HCT116 (cell line): ENCODE measurements at regions of chr1 and their contacts with region 1.

Region 1: GRCh38 chr1:117758444-117759316 is 152.8 kb downstream of the TENT5C start:
- DNase-seq: peak; percentile 69
- ATAC-seq: peak; percentile 94
- H3K4me3 ChIP-seq: peak overlapping the region; percentile 37 to 43
- H3K27ac ChIP-seq: no peak overlapping the region
- H3K4me1 ChIP-seq: peaks cover 0 to 12% of the 10 kb centered on the region in 2 experiments; a peak in 2 of 4 replicates
- H3K27me3 ChIP-seq: no peaks in the 10 kb centered on the region
- CTCF ChIP-seq: peak; percentile 65 to 92 (median 83)
- POLR2A ChIP-seq: no peak
- RAD21 ChIP-seq: peak; percentile 72

Region 2: GRCh38 chr1:117121776-117122697 is 636.6 kb before region 1 on chr1:
- CTCF ChIA-PET with region 1: no interaction called
- POLR2A ChIA-PET with region 1: no interaction called
- RAD21 ChIA-PET with region 1: no interaction called
- intact Hi-C with region 1: loop called (anchors 10 kb)
- DNase-seq: peak; percentile 90
- ATAC-seq: peak; percentile 97
- H3K4me3 ChIP-seq: peak overlapping the region; percentile 46 to 67
- H3K27ac ChIP-seq: peak overlapping the region; percentile 58
- H3K4me1 ChIP-seq: peaks cover 0 to 14% of the 10 kb centered on the region in 2 experiments; a peak in 1 of 4 replicates
- H3K27me3 ChIP-seq: peaks cover 9% of the 10 kb centered on the region; the same call in 1 of the 2 replicates
- CTCF ChIP-seq: peak; percentile 52 to 75 (median 68); a peak in 5 of 6 replicates
- POLR2A ChIP-seq: peak; percentile 17
- RAD21 ChIP-seq: peak; percentile 61

Region 3: DNA sequence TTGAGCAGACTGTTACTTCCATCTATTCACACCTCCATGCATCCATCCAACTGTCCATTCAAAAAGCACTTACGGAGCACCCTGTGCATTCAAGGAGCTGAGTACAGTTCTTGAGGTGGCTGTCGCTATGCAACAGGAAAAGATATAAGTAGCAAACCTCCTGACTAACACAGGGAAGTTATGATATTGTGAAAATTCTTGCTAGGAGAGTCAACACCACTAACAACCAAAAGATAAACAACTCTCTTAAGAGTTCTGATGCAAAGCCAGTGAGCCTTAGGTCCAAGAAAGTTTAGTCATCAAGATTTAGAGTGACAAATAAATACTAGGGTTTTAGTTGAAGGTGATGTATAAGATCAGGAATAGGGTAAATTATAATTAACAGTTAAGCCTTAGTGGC is 592.6 kb before region 1 on chr1:
- CTCF ChIA-PET with region 1: no interaction called
- POLR2A ChIA-PET with region 1: no interaction called
- RAD21 ChIA-PET with region 1: no interaction called
- intact Hi-C with region 1: no loop called
- DNase-seq: no peak
- ATAC-seq: no peak
- H3K4me3 ChIP-seq: no peak overlapping the region
- H3K27ac ChIP-seq: no peak overlapping the region
- H3K4me1 ChIP-seq: no peaks in the 10 kb centered on the region
- H3K27me3 ChIP-seq: no peaks in the 10 kb centered on the region
- CTCF ChIP-seq: no peak
- POLR2A ChIP-seq: no peak
- RAD21 ChIP-seq: no peak

Region 4: GRCh38 chr1:117512743-117513321 is 245.8 kb before region 1 on chr1:
- CTCF ChIA-PET with region 1: interaction called, 26 read pairs
- POLR2A ChIA-PET with region 1: interaction called, 3 read pairs
- RAD21 ChIA-PET with region 1: interaction called in 1 of 2 experiments, 4 read pairs
- intact Hi-C with region 1: loop called (anchors 1 kb)
- DNase-seq: no peak
- ATAC-seq: peak; percentile 52; the same call in 1 of the 2 replicates
- H3K4me3 ChIP-seq: no peak overlapping the region
- H3K27ac ChIP-seq: no peak overlapping the region
- H3K4me1 ChIP-seq: no peaks in the 10 kb centered on the region
- H3K27me3 ChIP-seq: no peaks in the 10 kb centered on the region
- CTCF ChIP-seq: peak; percentile 41 to 73 (median 47); a peak in 4 of 6 replicates
- POLR2A ChIP-seq: no peak
- RAD21 ChIP-seq: peak; percentile 64

Region 5: GRCh38 chr1:117710710-117711109 is 48.0 kb before region 1 on chr1:
- CTCF ChIA-PET with region 1: interaction called, 10 read pairs
- POLR2A ChIA-PET with region 1: no interaction called
- RAD21 ChIA-PET with region 1: no interaction called
- intact Hi-C with region 1: loop called (anchors 5 kb)
- DNase-seq: no peak
- ATAC-seq: peak; percentile 82
- H3K4me3 ChIP-seq: no peak overlapping the region
- H3K27ac ChIP-seq: no peak overlapping the region
- H3K4me1 ChIP-seq: no peaks in the 10 kb centered on the region
- H3K27me3 ChIP-seq: no peaks in the 10 kb centered on the region
- CTCF ChIP-seq: peak; percentile 24 to 60 (median 57); a peak in 5 of 6 replicates
- POLR2A ChIP-seq: no peak
- RAD21 ChIP-seq: peak; percentile 49

Region 6: GRCh38 chr1:117895482-117896114 is 136.9 kb after region 1 on chr1:
- CTCF ChIA-PET with region 1: interaction called, 13 read pairs
- POLR2A ChIA-PET with region 1: no interaction called
- RAD21 ChIA-PET with region 1: no interaction called
- intact Hi-C with region 1: no loop called
- DNase-seq: peak; percentile 54
- ATAC-seq: peak; percentile 70
- H3K4me3 ChIP-seq: no peak overlapping the region
- H3K27ac ChIP-seq: no peak overlapping the region
- H3K4me1 ChIP-seq: no peaks in the 10 kb centered on the region
- H3K27me3 ChIP-seq: no peaks in the 10 kb centered on the region
- CTCF ChIP-seq: peak; percentile 69 to 79 (median 71); a peak in 5 of 6 replicates
- POLR2A ChIP-seq: no peak
- RAD21 ChIP-seq: peak; percentile 80